H1 (cell line): ENCODE measurements at regions of chr3 and their contacts with region 1.

Region 1: GRCh38 chr3:52299879-52300611 is 12.4 kb downstream of the GLYCTK start:
- DNase-seq: peak in 1 of 2 experiments; percentile 67
- H3K4me3 ChIP-seq: peak overlapping the region; percentile 7 to 57 (median 44); a peak in 7 of 8 replicates
- H3K27ac ChIP-seq: no peak overlapping the region
- H3K4me1 ChIP-seq: peaks cover 0 to 26% (median 20%) of the 10 kb centered on the region in 4 experiments; a peak in 6 of 7 replicates
- H3K27me3 ChIP-seq: peaks cover 0 to 8% (median 2%) of the 10 kb centered on the region in 4 experiments; a peak in 3 of 7 replicates
- CTCF ChIP-seq: peak in 1 of 3 experiments; percentile 15; a peak in 1 of 4 replicates
- EP300 ChIP-seq: no peak
- POLR2A ChIP-seq: no peak
- RAD21 ChIP-seq: no peak

Region 2: GRCh38 chr3:52317208-52318000 is 17.4 kb after region 1 on chr3:
- CTCF ChIA-PET with region 1: interaction called, 9 read pairs
- POLR2A ChIA-PET with region 1: interaction called, 24 read pairs
- DNase-seq: peak; percentile 56 to 92
- H3K4me3 ChIP-seq: peak overlapping the region; percentile 39 to 62 (median 48); a peak in 7 of 8 replicates
- H3K27ac ChIP-seq: no peak overlapping the region
- H3K4me1 ChIP-seq: peaks cover 0 to 3% (median 3%) of the 10 kb centered on the region in 4 experiments; a peak in 5 of 7 replicates
- H3K27me3 ChIP-seq: peaks cover 0 to 14% (median 10%) of the 10 kb centered on the region in 4 experiments; a peak in 4 of 7 replicates
- CTCF ChIP-seq: no peak
- EP300 ChIP-seq: no peak
- POLR2A ChIP-seq: peak in 1 of 2 experiments; percentile 49; a peak in 1 of 3 replicates
- RAD21 ChIP-seq: no peak

Region 3: DNA sequence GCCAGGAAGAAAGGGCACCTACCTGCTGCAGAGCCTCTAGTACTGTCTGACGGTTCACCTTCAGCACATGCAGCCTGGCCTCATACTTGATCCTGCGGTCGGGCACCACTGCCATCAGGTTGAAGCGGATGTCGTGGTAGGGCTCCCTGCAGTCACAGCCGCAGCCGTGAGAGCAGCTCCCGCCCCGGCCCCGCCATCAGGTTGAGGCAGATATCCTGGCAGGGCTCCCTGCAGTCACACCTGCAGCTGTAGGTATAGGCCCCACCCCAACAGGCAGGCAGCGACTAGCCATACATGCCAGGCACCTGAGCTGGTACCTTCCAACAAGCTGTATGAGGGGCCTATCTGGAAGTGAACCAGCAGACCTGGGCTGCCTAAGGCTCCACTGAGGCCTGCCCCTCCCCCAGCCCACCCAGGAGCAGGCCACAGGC is 106.2 kb after region 1 on chr3:
- CTCF ChIA-PET with region 1: no interaction called
- POLR2A ChIA-PET with region 1: no interaction called
- DNase-seq: no peak
- H3K4me3 ChIP-seq: no peak overlapping the region
- H3K27ac ChIP-seq: no peak overlapping the region
- H3K4me1 ChIP-seq: peaks cover 0 to 10% (median 1%) of the 10 kb centered on the region in 4 experiments; a peak in 5 of 7 replicates
- H3K27me3 ChIP-seq: no peaks in the 10 kb centered on the region
- CTCF ChIP-seq: no peak
- EP300 ChIP-seq: no peak
- POLR2A ChIP-seq: no peak
- RAD21 ChIP-seq: no peak